ENCODE measurements at regions of chr7 and their contacts with region 1.

Region 1: GRCh38 chr7:135281363-135281949 is 47.8 kb downstream of the STRA8 start:
- DNase-seq: peak; percentile 77 to 79 (median 78)
- H3K4me3 ChIP-seq: no peak overlapping the region
- H3K4me3 Mint-ChIP-seq: peak overlapping the region in 6 of 8 donors; percentile 16 to 72 (median 36)
- H3K27ac ChIP-seq: no peak overlapping the region
- H3K27ac Mint-ChIP-seq: peak overlapping the region in 4 of 7 donors; percentile 59 to 85 (median 72)
- H3K4me1 ChIP-seq: peaks cover 21% of the 10 kb centered on the region
- H3K4me1 Mint-ChIP-seq: peaks cover 15 to 24% (median 21%) of the 10 kb centered on the region in 4 donors
- H3K27me3 ChIP-seq: no peaks in the 10 kb centered on the region
- H3K27me3 Mint-ChIP-seq: peaks cover 5 to 8% of the 10 kb centered on the region in 2 donors

Region 2: DNA sequence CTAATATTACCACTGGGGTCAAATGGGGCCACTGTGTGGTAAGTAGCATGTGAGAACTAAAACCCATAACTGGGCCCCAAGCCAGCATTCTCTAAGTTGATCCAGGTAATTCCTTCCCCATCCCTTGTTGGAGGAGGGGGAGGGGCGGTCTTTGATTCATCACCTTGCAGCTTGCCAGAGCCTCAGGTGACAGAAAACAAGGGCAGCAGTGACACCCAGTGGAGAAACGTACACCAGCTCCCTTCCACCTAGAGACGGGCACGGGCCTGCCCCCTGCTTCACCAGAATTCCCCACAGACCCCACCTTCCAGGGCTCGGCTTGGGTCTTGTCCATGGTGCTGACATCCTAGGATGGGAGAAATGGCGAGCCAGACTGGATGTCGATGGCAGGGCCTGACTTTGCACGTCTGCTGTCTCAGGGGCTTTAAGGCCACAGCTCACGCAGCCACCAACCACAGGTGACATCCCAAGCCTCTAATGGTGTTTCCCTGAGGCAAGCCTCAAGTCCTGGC is 54.2 kb after region 1 on chr7:
- CTCF ChIA-PET with region 1: interaction called, 30 read pairs
- POLR2A ChIA-PET with region 1: no interaction called
- intact Hi-C with region 1: loop called (anchors 1 kb)
- DNase-seq: peak; percentile 9 to 42 (median 19)
- H3K4me3 ChIP-seq: no peak overlapping the region
- H3K4me3 Mint-ChIP-seq: no peak overlapping the region
- H3K27ac ChIP-seq: no peak overlapping the region
- H3K27ac Mint-ChIP-seq: no peak overlapping the region
- H3K4me1 ChIP-seq: no peaks in the 10 kb centered on the region
- H3K4me1 Mint-ChIP-seq: peaks cover 0 to 2% (median 0%) of the 10 kb centered on the region in 4 donors
- H3K27me3 ChIP-seq: no peaks in the 10 kb centered on the region
- H3K27me3 Mint-ChIP-seq: peaks cover 2% of the 10 kb centered on the region in 2 donors

Region 3: GRCh38 chr7:135389971-135390370 is 108.5 kb after region 1 on chr7:
- CTCF ChIA-PET with region 1: no interaction called
- POLR2A ChIA-PET with region 1: no interaction called
- intact Hi-C with region 1: loop called (anchors 10 kb)
- DNase-seq: no peak
- H3K4me3 ChIP-seq: no peak overlapping the region
- H3K4me3 Mint-ChIP-seq: no peak overlapping the region
- H3K27ac ChIP-seq: no peak overlapping the region
- H3K27ac Mint-ChIP-seq: no peak overlapping the region
- H3K4me1 ChIP-seq: no peaks in the 10 kb centered on the region
- H3K4me1 Mint-ChIP-seq: peaks cover 0 to 5% (median 4%) of the 10 kb centered on the region in 4 donors
- H3K27me3 ChIP-seq: no peaks in the 10 kb centered on the region
- H3K27me3 Mint-ChIP-seq: no peaks in the 10 kb centered on the region

Region 4: GRCh38 chr7:135558337-135558767 is 276.9 kb after region 1 on chr7:
- CTCF ChIA-PET with region 1: interaction called, 23 read pairs
- POLR2A ChIA-PET with region 1: interaction called, 4 read pairs
- intact Hi-C with region 1: loop called (anchors 1 kb)
- DNase-seq: peak; percentile 68 to 80 (median 70)
- H3K4me3 ChIP-seq: peak overlapping the region; percentile 92 to 96
- H3K4me3 Mint-ChIP-seq: no peak overlapping the region
- H3K27ac ChIP-seq: peak overlapping the region; percentile 92
- H3K27ac Mint-ChIP-seq: no peak overlapping the region
- H3K4me1 ChIP-seq: peaks cover 24% of the 10 kb centered on the region
- H3K4me1 Mint-ChIP-seq: peaks cover 17 to 23% (median 19%) of the 10 kb centered on the region in 4 donors
- H3K27me3 ChIP-seq: no peaks in the 10 kb centered on the region
- H3K27me3 Mint-ChIP-seq: peaks cover 0 to 2% of the 10 kb centered on the region in 2 donors